H1 (cell line): ENCODE measurements at regions of chr1 and their contacts with region 1.

Region 1: DNA sequence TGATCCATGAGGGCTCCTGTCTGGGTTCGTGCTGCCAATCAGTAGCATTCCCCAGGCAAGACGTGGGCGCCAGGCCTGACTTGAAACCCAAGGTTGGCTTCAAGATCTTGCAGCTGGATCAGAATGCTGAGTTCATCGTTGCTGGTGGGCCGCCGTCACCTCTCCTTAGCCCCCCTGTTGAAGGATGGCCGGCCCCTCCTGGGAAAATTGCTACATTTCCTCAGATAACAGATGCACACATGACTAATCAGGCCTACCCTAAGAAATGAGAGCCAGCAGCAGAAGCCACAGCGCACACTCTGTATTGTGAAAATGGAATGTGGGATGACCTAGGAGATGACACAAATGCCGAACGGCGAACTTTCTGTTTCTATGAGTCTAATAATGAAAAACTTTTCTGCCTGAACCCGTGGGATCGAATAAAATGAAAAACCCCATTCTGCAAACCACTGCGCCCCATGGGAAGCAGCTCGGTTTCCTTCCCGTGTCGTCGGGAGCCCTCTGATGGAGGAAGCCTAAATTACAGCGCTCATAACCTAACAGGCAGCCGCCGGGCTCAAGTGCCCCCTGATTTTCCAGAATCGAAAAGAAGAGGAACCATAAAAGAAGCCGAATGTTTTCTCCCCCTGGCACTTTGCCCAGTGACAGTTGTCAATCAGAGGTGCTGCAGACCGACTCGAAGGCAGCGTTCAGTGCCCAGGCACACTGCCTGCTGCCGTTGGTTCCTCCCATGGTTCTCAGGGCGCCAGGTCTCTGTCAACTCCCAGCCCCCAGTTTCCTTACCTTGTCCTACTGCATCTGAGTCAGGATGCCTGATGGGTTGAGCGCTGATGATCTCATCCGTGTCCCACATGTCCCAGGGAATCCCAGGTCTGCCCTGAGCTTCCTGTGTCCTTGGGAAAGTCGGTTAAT is 38.2 kb upstream of the H6PD start:
- DNase-seq: peak in 1 of 2 experiments; percentile 82
- H3K4me3 ChIP-seq: no peak overlapping the region
- H3K27ac ChIP-seq: no peak overlapping the region
- H3K4me1 ChIP-seq: peaks cover 0 to 11% (median 6%) of the 10 kb centered on the region in 4 experiments; a peak in 6 of 7 replicates
- H3K27me3 ChIP-seq: peaks cover 36 to 48% (median 46%) of the 10 kb centered on the region in 4 experiments
- CTCF ChIP-seq: peak; percentile 66 to 89 (median 69)
- EP300 ChIP-seq: no peak
- POLR2A ChIP-seq: no peak
- RAD21 ChIP-seq: peak; percentile 86 to 91

Region 2: DNA sequence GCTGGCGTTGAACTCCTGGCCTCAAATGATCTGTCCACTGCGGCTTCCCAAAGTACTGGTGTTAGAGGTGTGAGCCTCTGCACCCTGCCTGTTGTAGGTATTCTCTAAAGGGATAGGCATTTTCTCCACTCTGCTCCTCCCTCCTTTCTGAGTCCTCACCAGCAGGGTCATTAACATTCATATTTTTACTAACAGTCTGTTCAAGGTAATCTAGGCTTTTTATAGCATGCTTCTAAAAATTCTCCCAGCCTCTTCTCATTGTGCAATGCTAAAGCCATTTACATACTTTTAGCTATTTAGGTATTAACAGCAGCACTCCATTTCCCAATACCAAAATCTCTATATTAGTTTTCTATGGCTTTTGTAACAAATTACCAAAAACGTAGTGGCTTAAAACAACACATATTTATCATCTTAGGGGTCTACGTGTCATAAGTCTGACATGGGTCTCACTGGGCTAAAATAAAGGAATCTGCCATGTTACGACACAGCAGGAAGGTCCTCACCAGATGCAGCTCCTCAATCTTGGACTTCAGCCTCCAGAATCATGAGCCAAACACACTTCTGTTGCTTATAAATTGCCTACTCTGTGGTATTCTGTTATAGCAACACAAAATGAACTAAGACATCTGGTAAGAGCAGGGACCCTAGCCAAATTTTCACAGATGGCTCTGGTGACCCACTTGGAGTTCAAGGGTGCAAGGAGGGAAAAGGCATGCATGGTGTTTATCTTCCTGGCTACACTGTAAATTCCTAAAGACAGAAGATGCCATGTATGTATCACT is 167.3 kb before region 1 on chr1:
- CTCF ChIA-PET with region 1: no interaction called
- POLR2A ChIA-PET with region 1: no interaction called
- DNase-seq: no peak
- H3K4me3 ChIP-seq: no peak overlapping the region
- H3K27ac ChIP-seq: no peak overlapping the region
- H3K4me1 ChIP-seq: peaks cover 0 to 2% (median 0%) of the 10 kb centered on the region in 4 experiments; a peak in 2 of 7 replicates
- H3K27me3 ChIP-seq: no peaks in the 10 kb centered on the region
- CTCF ChIP-seq: no peak
- EP300 ChIP-seq: no peak
- POLR2A ChIP-seq: no peak
- RAD21 ChIP-seq: no peak

Region 3: DNA sequence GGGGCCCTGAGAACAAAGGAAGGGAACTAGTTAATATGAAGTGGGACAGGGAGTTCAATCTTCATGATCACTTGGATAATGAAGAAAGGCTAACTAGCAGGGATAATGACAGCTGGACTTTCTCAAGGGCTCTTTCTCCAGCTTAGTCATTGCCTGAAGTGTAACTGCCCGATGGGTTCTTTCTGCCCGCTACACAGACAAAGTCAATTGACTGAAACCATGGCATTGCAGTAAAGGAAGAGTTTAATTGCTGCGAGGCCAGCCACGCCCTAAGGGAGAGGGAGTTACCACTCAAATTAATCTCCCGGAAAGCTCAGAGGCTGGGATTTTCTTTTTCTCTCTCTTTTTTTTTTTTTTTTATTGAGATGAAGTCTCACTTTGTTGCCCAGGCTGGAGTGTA is 110.3 kb before region 1 on chr1:
- CTCF ChIA-PET with region 1: no interaction called
- POLR2A ChIA-PET with region 1: no interaction called
- DNase-seq: no peak
- H3K4me3 ChIP-seq: no peak overlapping the region
- H3K27ac ChIP-seq: no peak overlapping the region
- H3K4me1 ChIP-seq: no peaks in the 10 kb centered on the region
- H3K27me3 ChIP-seq: no peaks in the 10 kb centered on the region
- CTCF ChIP-seq: no peak
- EP300 ChIP-seq: no peak
- POLR2A ChIP-seq: no peak
- RAD21 ChIP-seq: no peak

Region 4: DNA sequence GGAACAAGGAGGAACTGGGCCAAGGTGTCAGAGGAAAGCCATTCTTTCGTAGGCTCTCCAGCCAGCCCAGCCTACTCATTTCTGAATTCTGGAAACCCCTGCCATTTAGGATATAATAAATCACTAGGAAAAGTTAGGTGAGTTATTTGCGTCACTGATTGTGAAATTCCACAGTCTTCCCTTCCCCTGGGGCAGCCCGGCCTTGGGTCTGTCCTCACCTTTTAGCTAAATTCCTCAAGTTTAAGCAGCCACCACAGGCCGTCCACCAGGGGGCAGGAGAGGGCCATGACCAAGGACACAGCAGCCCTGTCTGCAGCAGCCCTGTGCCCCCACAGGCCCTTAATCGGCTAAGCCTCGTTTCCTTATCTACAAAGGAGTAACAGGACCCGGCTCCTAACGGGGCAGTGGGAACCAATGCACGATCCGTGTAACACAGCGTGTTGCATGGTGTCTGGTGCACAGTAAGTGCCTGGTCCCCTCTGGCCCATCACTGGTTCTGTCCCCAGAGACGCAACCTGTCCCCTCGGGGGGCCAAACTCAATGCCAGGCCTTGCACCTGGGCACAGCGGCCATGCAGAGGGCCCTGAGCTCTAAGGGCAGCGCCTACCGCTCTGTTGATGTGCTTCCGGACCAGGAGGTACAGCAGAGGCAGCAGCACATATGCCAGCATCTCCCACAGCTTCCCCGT is 85.6 kb before region 1 on chr1:
- CTCF ChIA-PET with region 1: interaction called, 38 read pairs
- POLR2A ChIA-PET with region 1: no interaction called
- DNase-seq: peak; percentile 94 to 98
- H3K4me3 ChIP-seq: no peak overlapping the region
- H3K27ac ChIP-seq: no peak overlapping the region
- H3K4me1 ChIP-seq: no peaks in the 10 kb centered on the region; a peak in 2 of 7 replicates
- H3K27me3 ChIP-seq: no peaks in the 10 kb centered on the region
- CTCF ChIP-seq: peak; percentile 96 to 99 (median 97)
- EP300 ChIP-seq: no peak
- POLR2A ChIP-seq: no peak
- RAD21 ChIP-seq: peak; percentile 94 to 97

Region 5: DNA sequence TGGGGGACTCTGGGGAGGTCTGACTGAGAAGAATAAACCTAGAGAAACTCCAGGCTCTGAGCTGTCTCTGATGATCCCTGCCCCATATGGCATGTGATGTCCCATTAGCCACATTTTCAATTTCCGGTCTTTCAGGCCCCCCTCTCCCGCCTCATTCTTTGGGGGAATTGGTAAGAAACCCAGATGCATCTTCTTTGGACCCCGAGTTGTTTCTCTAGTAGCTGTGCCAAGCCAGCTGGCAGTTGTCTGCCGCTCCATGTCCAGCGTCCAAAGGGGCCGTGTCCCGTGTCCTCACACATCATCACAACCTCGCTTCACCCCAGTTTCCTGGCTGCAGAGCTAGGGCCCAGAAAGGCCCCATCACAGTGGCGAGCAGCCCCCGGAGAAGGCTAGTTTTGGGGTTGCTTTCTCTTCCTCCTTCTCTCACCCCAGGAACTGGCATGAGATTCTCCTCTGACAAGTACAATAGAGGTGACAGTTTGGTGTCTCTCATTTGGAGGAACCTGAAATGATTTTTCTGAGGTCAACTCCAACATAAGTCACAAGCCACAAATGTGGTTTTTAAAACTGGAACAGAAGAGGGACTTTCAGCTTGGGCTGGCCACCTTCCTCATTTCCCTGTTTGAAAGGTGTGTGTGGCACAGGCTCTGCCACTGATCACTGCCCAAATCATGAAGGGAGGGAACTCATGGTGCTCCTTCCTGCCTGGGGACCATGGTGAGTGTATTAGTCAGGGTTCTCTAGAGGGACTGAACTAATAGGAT is 61.1 kb before region 1 on chr1:
- CTCF ChIA-PET with region 1: interaction called, 39 read pairs
- POLR2A ChIA-PET with region 1: no interaction called
- DNase-seq: no peak
- H3K4me3 ChIP-seq: no peak overlapping the region
- H3K27ac ChIP-seq: no peak overlapping the region
- H3K4me1 ChIP-seq: no peaks in the 10 kb centered on the region
- H3K27me3 ChIP-seq: no peaks in the 10 kb centered on the region
- CTCF ChIP-seq: no peak
- EP300 ChIP-seq: no peak
- POLR2A ChIP-seq: no peak
- RAD21 ChIP-seq: no peak

Region 6: GRCh38 chr1:9166289-9167235 is 29.8 kb before region 1 on chr1:
- CTCF ChIA-PET with region 1: interaction called, 10 read pairs
- POLR2A ChIA-PET with region 1: no interaction called
- DNase-seq: no peak
- H3K4me3 ChIP-seq: 0 out of 8 replicates have a peak overlapping the region, but pooled peaks of 1 of the 4 experiments have one; percentile 5
- H3K27ac ChIP-seq: no peak overlapping the region
- H3K4me1 ChIP-seq: peaks cover 0 to 26% (median 7%) of the 10 kb centered on the region in 4 experiments; a peak in 6 of 7 replicates
- H3K27me3 ChIP-seq: no peaks in the 10 kb centered on the region
- CTCF ChIP-seq: no peak
- EP300 ChIP-seq: no peak
- POLR2A ChIP-seq: no peak
- RAD21 ChIP-seq: no peak

Region 7: GRCh38 chr1:9181176-9181906 is 15.0 kb before region 1 on chr1:
- CTCF ChIA-PET with region 1: interaction called, 45 read pairs
- POLR2A ChIA-PET with region 1: interaction called, 8 read pairs
- DNase-seq: peak in 1 of 2 experiments; percentile 97
- H3K4me3 ChIP-seq: peak overlapping the region; percentile 54 to 87 (median 78)
- H3K27ac ChIP-seq: no peak overlapping the region
- H3K4me1 ChIP-seq: peaks cover 4 to 13% (median 7%) of the 10 kb centered on the region in 4 experiments; a peak in 6 of 7 replicates
- H3K27me3 ChIP-seq: peaks cover 0 to 23% (median 12%) of the 10 kb centered on the region in 4 experiments; a peak in 5 of 7 replicates
- CTCF ChIP-seq: peak; percentile 79 to 97 (median 88)
- EP300 ChIP-seq: no peak
- POLR2A ChIP-seq: no peak; a peak in 1 of 3 replicates
- RAD21 ChIP-seq: peak; percentile 38 to 58

Region 8: DNA sequence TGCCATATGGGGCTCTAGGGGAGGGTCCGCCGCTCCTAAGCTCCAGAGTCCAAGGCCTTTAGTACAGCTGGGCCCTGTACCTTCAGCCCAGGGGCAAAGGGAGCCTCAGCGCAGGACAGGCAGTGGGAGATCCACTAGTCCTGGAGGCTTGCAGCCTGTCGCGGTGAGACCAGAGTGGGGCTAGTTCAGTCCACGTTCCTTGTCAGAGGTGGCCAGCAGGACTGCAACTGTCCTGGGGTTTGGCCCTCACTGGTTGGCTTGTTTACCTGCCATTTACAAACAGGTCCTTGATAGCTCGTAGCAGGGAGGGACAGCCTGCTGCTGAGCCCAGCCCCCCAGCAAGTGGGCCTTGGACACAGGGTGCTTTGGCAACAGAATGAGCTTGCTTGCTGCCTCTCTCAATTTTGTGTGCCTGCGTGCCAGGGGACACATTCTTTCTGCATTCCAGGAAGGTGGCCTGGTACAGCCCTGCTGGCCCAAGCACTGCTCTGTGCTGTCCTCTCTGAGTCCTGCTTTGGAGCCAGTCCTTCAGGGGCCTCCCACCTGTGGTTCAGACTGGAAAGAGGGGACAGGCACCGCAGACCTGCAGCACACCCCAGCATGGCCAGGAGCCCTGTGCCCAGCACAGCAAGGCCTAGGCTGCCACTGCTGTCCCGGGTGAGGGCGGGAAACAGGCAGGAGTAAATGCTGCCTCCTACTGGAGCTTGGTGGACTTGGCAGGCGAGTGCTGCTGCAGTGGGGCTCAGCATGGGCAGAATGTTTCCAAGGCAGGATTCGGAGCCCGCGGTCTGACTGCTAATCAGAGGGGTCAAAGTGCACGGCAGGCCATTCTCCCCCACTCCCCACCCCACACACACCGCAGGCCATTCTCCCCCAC is 53.4 kb after region 1 on chr1:
- CTCF ChIA-PET with region 1: interaction called, 38 read pairs
- POLR2A ChIA-PET with region 1: no interaction called
- DNase-seq: peak in 1 of 2 experiments; percentile 87
- H3K4me3 ChIP-seq: no peak overlapping the region
- H3K27ac ChIP-seq: no peak overlapping the region; the same call in none of the 2 replicates
- H3K4me1 ChIP-seq: peaks cover 17 to 37% (median 30%) of the 10 kb centered on the region in 4 experiments
- H3K27me3 ChIP-seq: no peaks in the 10 kb centered on the region; a peak in 1 of 7 replicates
- CTCF ChIP-seq: peak; percentile 90 to 99 (median 98)
- EP300 ChIP-seq: no peak
- POLR2A ChIP-seq: no peak
- RAD21 ChIP-seq: peak; percentile 80 to 87

Region 9: GRCh38 chr1:9384751-9385245 is 188.4 kb after region 1 on chr1:
- CTCF ChIA-PET with region 1: no interaction called
- POLR2A ChIA-PET with region 1: no interaction called
- DNase-seq: no peak
- H3K4me3 ChIP-seq: no peak overlapping the region
- H3K27ac ChIP-seq: no peak overlapping the region
- H3K4me1 ChIP-seq: peaks cover 0 to 4% (median 3%) of the 10 kb centered on the region in 4 experiments; a peak in 4 of 7 replicates
- H3K27me3 ChIP-seq: no peaks in the 10 kb centered on the region
- CTCF ChIP-seq: no peak
- EP300 ChIP-seq: peak in 1 of 2 experiments; percentile 72; a peak in 1 of 3 replicates
- POLR2A ChIP-seq: no peak
- RAD21 ChIP-seq: no peak

Region 10: DNA sequence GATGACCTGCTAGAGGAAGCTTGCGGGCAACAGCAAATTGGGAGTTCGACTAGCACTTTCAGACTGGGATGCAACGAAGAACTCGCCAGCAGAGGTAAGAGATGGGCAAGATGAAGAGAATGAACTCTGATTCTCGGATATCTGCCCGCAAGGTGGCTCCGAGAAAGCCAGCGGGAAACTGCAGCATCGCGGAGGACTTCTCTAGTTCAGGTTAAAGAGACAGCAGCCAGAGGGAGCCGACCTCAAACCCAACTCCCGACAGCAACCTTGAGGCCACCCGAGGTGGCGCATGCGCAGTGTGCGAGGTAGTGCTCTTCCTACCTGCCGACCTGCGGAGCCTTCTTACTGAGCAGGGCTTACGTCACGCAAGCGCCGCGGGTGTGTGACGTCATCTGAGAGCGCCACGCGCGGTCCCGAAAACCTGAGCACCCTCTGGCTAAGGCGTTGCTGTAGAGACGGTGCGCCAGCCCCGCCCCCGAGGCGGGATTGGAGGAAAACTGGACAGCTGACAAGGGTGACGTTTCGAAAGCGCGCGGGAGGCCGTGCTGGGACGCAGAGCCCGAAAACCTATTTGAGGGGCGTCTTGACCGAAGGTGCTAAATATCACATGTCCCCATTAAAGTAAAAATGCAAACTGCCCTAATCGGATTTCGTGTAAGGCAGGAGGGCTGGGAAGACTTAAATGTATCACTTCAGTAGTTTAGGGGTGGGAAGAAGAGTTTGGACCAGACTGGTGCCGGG is 232.4 kb after region 1 on chr1:
- CTCF ChIA-PET with region 1: no interaction called
- POLR2A ChIA-PET with region 1: no interaction called
- DNase-seq: peak; percentile 100
- H3K4me3 ChIP-seq: peak overlapping the region; percentile 54 to 68 (median 57)
- H3K27ac ChIP-seq: peak overlapping the region; percentile 68
- H3K4me1 ChIP-seq: peaks cover 0 to 5% (median 2%) of the 10 kb centered on the region in 4 experiments; a peak in 4 of 7 replicates
- H3K27me3 ChIP-seq: no peaks in the 10 kb centered on the region
- CTCF ChIP-seq: peak; percentile 14 to 41 (median 33); a peak in 3 of 4 replicates
- EP300 ChIP-seq: peak in 1 of 2 experiments; percentile 81; a peak in 1 of 3 replicates
- POLR2A ChIP-seq: peak; percentile 71 to 91
- RAD21 ChIP-seq: peak; percentile 41 to 45; a peak in 2 of 4 replicates